ENCODE measurements at regions of chr4 and their contacts with region 1.

Region 1: DNA sequence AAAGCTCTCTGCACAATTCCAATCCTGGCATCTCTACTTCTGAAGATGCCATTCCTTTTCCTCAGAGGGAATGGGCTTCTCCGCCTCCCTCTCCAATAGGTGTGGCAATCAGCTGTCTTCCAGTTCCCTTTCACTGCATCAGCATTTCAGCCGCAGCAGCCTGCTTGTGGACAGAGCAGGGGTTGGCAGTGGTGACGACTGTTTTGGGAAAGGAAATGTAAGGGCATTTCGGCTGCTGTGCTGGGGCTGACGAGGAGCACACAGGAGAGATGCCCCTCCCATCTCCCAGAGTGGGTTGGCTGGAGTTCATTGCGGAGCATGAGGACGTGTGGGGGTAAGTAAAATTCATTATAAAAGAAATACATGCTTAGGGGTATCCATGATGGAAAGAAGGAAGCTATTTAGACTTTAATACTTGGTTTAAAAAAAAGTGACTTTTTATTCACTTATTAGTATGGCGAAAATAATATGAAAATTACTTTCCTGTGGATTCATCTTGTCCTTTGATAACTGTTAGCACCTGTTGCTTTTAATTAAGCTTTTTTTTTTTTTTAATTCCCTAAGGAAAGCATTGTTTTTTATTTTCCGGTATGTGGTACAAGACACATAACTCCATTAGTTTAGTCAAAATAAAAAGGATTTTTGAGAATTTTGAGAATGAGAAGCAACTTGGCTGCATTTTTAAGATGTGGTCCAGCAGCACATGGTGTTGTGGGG is at the start of gene LIMCH1:
- DNase-seq: peak; percentile 87 to 91
- ATAC-seq: peak; percentile 78
- H3K4me3 ChIP-seq: peak within 1 kb of the TSS in 1 of 2 donors; percentile 63
- H3K27ac ChIP-seq: peak within 1 kb of the TSS; percentile 63 to 93
- H3K4me1 ChIP-seq: peaks cover 11 to 15% of the 10 kb centered on the region in 2 donors
- H3K27me3 ChIP-seq: no peaks in the 10 kb centered on the region
- total RNA-seq, gene LIMCH1: 177 to 191 TPM

Region 2: GRCh38 chr4:40976343-40976742 is 561.8 kb before region 1 on chr4:
- intact Hi-C with region 1: no loop called
- DNase-seq: no peak
- ATAC-seq: no peak
- H3K4me3 ChIP-seq: no peak overlapping the region
- H3K27ac ChIP-seq: no peak overlapping the region
- H3K4me1 ChIP-seq: no peaks in the 10 kb centered on the region
- H3K27me3 ChIP-seq: no peaks in the 10 kb centered on the region

Region 3: DNA sequence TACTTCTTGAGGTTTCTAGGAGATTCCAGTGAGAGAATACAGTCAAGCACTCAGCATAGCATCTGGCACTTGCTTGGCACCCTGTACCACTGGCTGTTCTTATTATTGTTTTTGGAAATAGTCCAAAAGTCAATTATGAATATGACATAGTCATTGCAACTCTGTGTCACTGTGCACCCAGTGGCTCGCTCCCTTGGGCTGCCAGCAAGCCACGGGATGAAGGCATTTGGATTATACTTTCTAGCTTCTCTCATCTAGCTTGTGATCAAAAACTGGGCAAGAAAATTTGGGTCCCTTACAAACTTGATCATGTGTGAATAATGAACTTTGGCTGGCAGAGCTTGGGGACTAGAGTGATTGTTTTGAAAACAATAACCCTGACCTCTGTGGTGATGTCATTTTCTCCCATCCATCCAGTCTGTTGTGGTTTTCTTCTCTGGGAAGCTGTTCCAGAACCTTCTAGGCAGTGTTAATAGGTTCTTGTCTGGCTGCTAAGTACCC is 33.0 kb before region 1 on chr4:
- intact Hi-C with region 1: loop called in 1 of 2 experiments (anchors 5 kb)
- DNase-seq: peak; percentile 77 to 80
- ATAC-seq: peak; percentile 79
- H3K4me3 ChIP-seq: no peak overlapping the region
- H3K27ac ChIP-seq: peak overlapping the region in 1 of 2 donors; percentile 64
- H3K4me1 ChIP-seq: peaks cover 5 to 27% of the 10 kb centered on the region in 2 donors
- H3K27me3 ChIP-seq: no peaks in the 10 kb centered on the region

Region 4: DNA sequence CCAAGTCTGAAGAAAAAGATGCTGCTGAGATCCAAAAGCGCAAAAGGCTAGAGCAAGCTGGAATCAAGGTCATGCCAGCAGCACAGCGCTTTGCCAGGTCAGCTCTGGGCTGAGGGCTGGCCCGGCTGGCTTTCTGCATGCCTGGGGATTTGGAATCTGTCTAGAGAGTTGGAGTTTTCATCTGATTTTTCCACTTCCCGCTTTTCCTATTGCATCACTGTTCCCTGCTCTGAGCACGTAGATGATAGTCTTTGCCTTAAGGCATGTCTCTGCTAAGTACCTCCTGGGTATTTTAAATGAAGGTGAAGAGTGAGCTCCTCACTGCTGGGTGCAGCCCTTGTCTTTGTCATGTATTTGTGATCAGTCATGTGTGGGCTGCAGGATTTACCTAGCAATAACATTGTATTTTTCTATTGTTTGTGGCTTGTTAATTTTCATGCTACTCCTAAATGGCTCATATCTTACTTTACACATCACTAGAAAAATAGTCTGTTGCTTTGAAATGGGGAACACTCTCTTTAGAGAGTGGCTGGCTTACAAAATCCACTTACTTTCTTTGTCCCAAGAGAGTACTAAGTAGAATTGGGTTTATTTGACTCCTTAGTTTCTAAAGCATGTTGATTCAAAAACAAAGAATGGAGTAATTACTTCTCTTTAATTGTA is 82.5 kb after region 1 on chr4:
- intact Hi-C with region 1: loop called (anchors 5 kb)
- DNase-seq: peak; percentile 75 to 78
- ATAC-seq: peak; percentile 65
- H3K4me3 ChIP-seq: no peak overlapping the region
- H3K27ac ChIP-seq: peak overlapping the region; percentile 29 to 65
- H3K4me1 ChIP-seq: peaks cover 3 to 8% of the 10 kb centered on the region in 2 donors
- H3K27me3 ChIP-seq: no peaks in the 10 kb centered on the region

Region 5: GRCh38 chr4:41644288-41644914 is 106.2 kb after region 1 on chr4:
- intact Hi-C with region 1: loop called in 1 of 2 experiments (anchors 5 kb)
- DNase-seq: peak; percentile 80 to 94
- ATAC-seq: peak; percentile 90
- H3K4me3 ChIP-seq: no peak overlapping the region
- H3K27ac ChIP-seq: no peak overlapping the region
- H3K4me1 ChIP-seq: peaks cover 2 to 3% of the 10 kb centered on the region in 2 donors
- H3K27me3 ChIP-seq: no peaks in the 10 kb centered on the region